ENCODE measurements at regions of chr2 and their contacts with region 1.

Region 1: GRCh38 chr2:96407041-96407918 is 71.7 kb downstream of the NCAPH start:
- DNase-seq: peak; percentile 66 to 95 (median 87)
- ATAC-seq: peak; percentile 94 to 98 (median 96)
- H3K4me3 ChIP-seq: peak overlapping the region in 1 of 2 donors; percentile 26
- H3K4me3 Mint-ChIP-seq: peak overlapping the region; percentile 71 to 78 (median 73)
- H3K27ac ChIP-seq: peak overlapping the region; percentile 67
- H3K27ac Mint-ChIP-seq: peak overlapping the region; percentile 99
- H3K4me1 ChIP-seq: peaks cover 11 to 36% of the 10 kb centered on the region in 2 experiments
- H3K4me1 Mint-ChIP-seq: peaks cover 35 to 44% (median 42%) of the 10 kb centered on the region in 3 donors
- H3K27me3 ChIP-seq: no peaks in the 10 kb centered on the region
- H3K27me3 Mint-ChIP-seq: no peaks in the 10 kb centered on the region

Region 2: GRCh38 chr2:96265840-96266679 is 141.2 kb before region 1 on chr2 and contains the starts of genes CIAO1 and TMEM127:
- CTCF ChIA-PET with region 1: interaction called in 1 of 2 experiments, 3 read pairs
- POLR2A ChIA-PET with region 1: interaction called in 1 of 2 experiments, 11 read pairs
- DNase-seq: peak; percentile 94 to 98 (median 96)
- ATAC-seq: peak; percentile 95 to 98 (median 96)
- H3K4me3 ChIP-seq: peak within 1 kb of the TSS; percentile 73 to 86
- H3K4me3 Mint-ChIP-seq: peak within 1 kb of the TSS; percentile 93 to 98 (median 97)
- H3K27ac ChIP-seq: peak within 1 kb of the TSS; percentile 57
- H3K27ac Mint-ChIP-seq: peak within 1 kb of the TSS; percentile 93 to 96
- H3K4me1 ChIP-seq: peaks cover 14 to 54% of the 10 kb centered on the region in 2 experiments
- H3K4me1 Mint-ChIP-seq: peaks cover 48 to 55% (median 49%) of the 10 kb centered on the region in 3 donors
- H3K27me3 ChIP-seq: no peaks in the 10 kb centered on the region
- H3K27me3 Mint-ChIP-seq: no peaks in the 10 kb centered on the region
- total RNA-seq, gene CIAO1: 65.2 to 87.0 (median 80.2) TPM
- total RNA-seq, gene TMEM127: 31.2 to 43.0 (median 40.4) TPM

Region 3: DNA sequence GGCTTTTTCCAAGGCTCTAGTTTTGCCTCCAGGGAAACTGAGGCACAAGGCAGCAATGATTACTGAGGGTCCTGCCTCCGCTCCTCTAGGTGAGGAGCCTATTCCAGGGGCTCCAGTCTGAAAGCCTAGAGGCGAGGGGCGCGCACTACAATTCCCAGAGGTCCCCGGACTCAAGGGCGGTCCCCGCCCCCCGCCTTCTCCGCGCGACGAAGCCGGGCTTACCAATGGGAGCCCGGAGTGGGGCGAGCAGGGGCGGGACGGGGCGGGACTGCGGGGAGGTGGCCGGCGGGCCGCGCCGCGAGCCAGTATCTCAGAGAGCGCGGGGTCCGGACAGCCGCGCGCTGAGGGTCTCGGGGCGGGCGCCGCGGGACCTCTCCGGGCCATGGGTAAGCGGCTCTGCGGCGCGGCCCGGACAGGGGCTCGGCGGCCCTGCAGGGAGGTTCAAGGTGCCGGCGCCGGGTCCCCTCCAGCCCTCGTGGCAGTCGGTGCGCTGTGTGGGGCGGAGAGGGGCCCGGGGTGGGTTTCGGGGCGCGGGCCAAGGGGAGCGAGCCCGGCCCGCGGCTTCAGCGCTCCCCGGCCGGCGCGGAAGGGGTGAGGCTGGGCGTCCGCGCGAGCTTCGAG is 129.3 kb after region 1 on chr2 and contains the start of gene ARID5A:
- CTCF ChIA-PET with region 1: interaction called in 1 of 2 experiments, 15 read pairs
- POLR2A ChIA-PET with region 1: interaction called, 3 to 4 read pairs
- DNase-seq: peak; percentile 82 to 95 (median 92)
- ATAC-seq: peak; percentile 61 to 82 (median 72)
- H3K4me3 ChIP-seq: peak within 1 kb of the TSS; percentile 82 to 96
- H3K4me3 Mint-ChIP-seq: peak within 1 kb of the TSS; percentile 93 to 96 (median 94)
- H3K27ac ChIP-seq: peak within 1 kb of the TSS; percentile 97
- H3K27ac Mint-ChIP-seq: peak within 1 kb of the TSS; percentile 98 to 99
- H3K4me1 ChIP-seq: peaks cover 23 to 62% of the 10 kb centered on the region in 2 experiments
- H3K4me1 Mint-ChIP-seq: peaks cover 56 to 61% (median 57%) of the 10 kb centered on the region in 3 donors
- H3K27me3 ChIP-seq: no peaks in the 10 kb centered on the region
- H3K27me3 Mint-ChIP-seq: no peaks in the 10 kb centered on the region
- total RNA-seq, gene ARID5A: 105 to 140 (median 116) TPM

Region 4: GRCh38 chr2:96554293-96555145 is 147.2 kb after region 1 on chr2:
- CTCF ChIA-PET with region 1: interaction called in 1 of 2 experiments, 14 read pairs
- POLR2A ChIA-PET with region 1: no interaction called
- DNase-seq: peak; percentile 35 to 87 (median 61)
- ATAC-seq: peak; percentile 47 to 76 (median 74)
- H3K4me3 ChIP-seq: no peak overlapping the region
- H3K4me3 Mint-ChIP-seq: peak overlapping the region; percentile 6 to 39 (median 28)
- H3K27ac ChIP-seq: no peak overlapping the region
- H3K27ac Mint-ChIP-seq: peak overlapping the region in 1 of 2 donors; percentile 79
- H3K4me1 ChIP-seq: peaks cover 0 to 20% of the 10 kb centered on the region in 2 experiments
- H3K4me1 Mint-ChIP-seq: peaks cover 22 to 36% (median 32%) of the 10 kb centered on the region in 3 donors
- H3K27me3 ChIP-seq: no peaks in the 10 kb centered on the region
- H3K27me3 Mint-ChIP-seq: no peaks in the 10 kb centered on the region